ENCODE measurements at regions of chr3 and their contacts with region 1.

Region 1: GRCh38 chr3:112293368-112294321 is at the start of gene SLC9C1:
- DNase-seq: peak; percentile 86
- H3K4me3 ChIP-seq: peak within 1 kb of the TSS; percentile 13
- H3K27ac ChIP-seq: peak within 1 kb of the TSS; percentile 44
- H3K4me1 ChIP-seq: peaks cover 44% of the 10 kb centered on the region
- CTCF ChIP-seq: peak; percentile 87
- total RNA-seq, gene SLC9C1: not detected in 2 replicates

Region 2: GRCh38 chr3:111936191-111936841 is 357.3 kb before region 1 on chr3:
- CTCF ChIA-PET with region 1: no interaction called
- POLR2A ChIA-PET with region 1: no interaction called
- intact Hi-C with region 1: no loop called
- DNase-seq: no peak
- H3K4me3 ChIP-seq: no peak overlapping the region
- H3K27ac ChIP-seq: no peak overlapping the region
- H3K4me1 ChIP-seq: no peaks in the 10 kb centered on the region
- CTCF ChIP-seq: no peak

Region 3: GRCh38 chr3:112089956-112090886 is 203.4 kb before region 1 on chr3:
- CTCF ChIA-PET with region 1: no interaction called
- POLR2A ChIA-PET with region 1: interaction called, 11 read pairs
- intact Hi-C with region 1: no loop called
- DNase-seq: peak; percentile 55
- H3K4me3 ChIP-seq: peak overlapping the region; percentile 38
- H3K27ac ChIP-seq: peak overlapping the region; percentile 69
- H3K4me1 ChIP-seq: peaks cover 71% of the 10 kb centered on the region
- CTCF ChIP-seq: no peak

Region 4: GRCh38 chr3:112303764-112304325 is 10.2 kb after region 1 on chr3:
- CTCF ChIA-PET with region 1: interaction called, 3 read pairs
- POLR2A ChIA-PET with region 1: interaction called, 16 read pairs
- intact Hi-C with region 1: no loop called
- DNase-seq: peak; percentile 50
- H3K4me3 ChIP-seq: peak overlapping the region; percentile 51
- H3K27ac ChIP-seq: peak overlapping the region; percentile 2
- H3K4me1 ChIP-seq: peaks cover 24% of the 10 kb centered on the region
- CTCF ChIP-seq: no peak

Region 5: GRCh38 chr3:112327371-112327951 is 33.8 kb after region 1 on chr3:
- CTCF ChIA-PET with region 1: no interaction called
- POLR2A ChIA-PET with region 1: interaction called, 3 read pairs
- intact Hi-C with region 1: loop called (anchors 1 kb)
- DNase-seq: peak; percentile 83
- H3K4me3 ChIP-seq: no peak overlapping the region
- H3K27ac ChIP-seq: no peak overlapping the region
- H3K4me1 ChIP-seq: peaks cover 6% of the 10 kb centered on the region
- CTCF ChIP-seq: peak; percentile 93

Region 6: GRCh38 chr3:112437146-112438022 is 143.7 kb after region 1 on chr3:
- CTCF ChIA-PET with region 1: interaction called, 3 read pairs
- POLR2A ChIA-PET with region 1: interaction called, 5 read pairs
- intact Hi-C with region 1: loop called (anchors 1 kb)
- DNase-seq: peak; percentile 77
- H3K4me3 ChIP-seq: no peak overlapping the region
- H3K27ac ChIP-seq: no peak overlapping the region
- H3K4me1 ChIP-seq: peaks cover 3% of the 10 kb centered on the region
- CTCF ChIP-seq: peak; percentile 82

Region 7: GRCh38 chr3:112519424-112520001 is 225.9 kb after region 1 on chr3:
- CTCF ChIA-PET with region 1: interaction called, 6 read pairs
- POLR2A ChIA-PET with region 1: interaction called, 4 read pairs
- intact Hi-C with region 1: loop called (anchors 1 kb)
- DNase-seq: peak; percentile 81
- H3K4me3 ChIP-seq: no peak overlapping the region
- H3K27ac ChIP-seq: no peak overlapping the region
- H3K4me1 ChIP-seq: no peaks in the 10 kb centered on the region
- CTCF ChIP-seq: peak; percentile 93

Measured in OCI-LY7 (cell line).